Activated B cell treated with CpG ODN at 0.5 μM for 24 hours (primary cell): ENCODE measurements at regions of chr16 and their contacts with region 1.

Region 1: GRCh38 chr16:58000706-58001676 is at the start of gene USB1:
- DNase-seq: peak; percentile 97
- ATAC-seq: peak; percentile 84
- H3K4me3 Mint-ChIP-seq: peak within 1 kb of the TSS; percentile 94
- H3K27ac Mint-ChIP-seq: peak within 1 kb of the TSS; percentile 92
- H3K4me1 Mint-ChIP-seq: peaks cover 42% of the 10 kb centered on the region
- H3K27me3 Mint-ChIP-seq: no peaks in the 10 kb centered on the region
- CTCF ChIP-seq: no peak
- total RNA-seq, gene USB1: 37.4 and 40.7 TPM in 2 replicates

Region 2: DNA sequence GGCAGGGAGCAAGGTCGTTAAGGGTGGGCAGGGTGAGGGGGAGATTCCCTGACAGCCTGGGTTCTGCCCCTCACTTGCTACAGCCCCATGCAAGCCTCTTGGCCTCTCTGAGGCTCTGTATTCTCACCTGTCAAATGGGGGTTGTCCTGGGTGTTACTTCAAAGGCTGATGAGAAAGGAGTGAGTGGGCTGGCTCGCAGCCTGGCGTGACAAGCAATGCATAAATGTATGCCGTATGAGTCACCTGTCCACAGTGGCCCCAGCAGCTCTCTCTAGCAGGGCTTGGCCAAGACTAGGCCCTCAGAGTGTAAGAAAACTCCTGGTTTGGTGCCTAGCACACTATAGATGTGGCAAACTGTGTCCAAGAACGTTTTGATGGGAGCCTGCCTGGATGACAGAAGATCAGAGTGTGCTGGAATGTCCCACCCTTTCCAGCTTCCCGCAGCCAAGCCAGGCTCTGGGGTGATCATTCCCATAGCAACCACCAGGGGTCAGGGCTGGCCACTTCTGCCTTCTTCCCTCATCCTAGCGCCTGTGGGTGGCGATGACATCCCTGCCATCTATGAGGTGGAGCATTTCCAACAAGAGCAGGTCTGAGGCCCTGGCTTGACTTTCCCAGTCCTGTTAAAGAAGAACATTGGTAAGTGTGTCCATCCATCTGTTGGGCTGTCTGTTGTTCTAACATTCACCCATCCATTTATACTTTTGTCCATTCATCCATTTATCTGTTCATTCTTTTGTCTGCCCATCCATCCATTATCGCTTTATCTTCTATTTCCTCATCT is 409.7 kb before region 1 on chr16:
- CTCF ChIA-PET with region 1: interaction called, 3 read pairs
- POLR2A ChIA-PET with region 1: no interaction called
- intact Hi-C with region 1: loop called (anchors 1 kb)
- DNase-seq: no peak
- ATAC-seq: peak; percentile 90
- H3K4me3 Mint-ChIP-seq: no peak overlapping the region
- H3K27ac Mint-ChIP-seq: no peak overlapping the region
- H3K4me1 Mint-ChIP-seq: peaks cover 21% of the 10 kb centered on the region
- H3K27me3 Mint-ChIP-seq: peaks cover 11% of the 10 kb centered on the region
- CTCF ChIP-seq: no peak

Region 3: GRCh38 chr16:57757326-57757786 is 243.6 kb before region 1 on chr16:
- CTCF ChIA-PET with region 1: no interaction called
- POLR2A ChIA-PET with region 1: no interaction called
- intact Hi-C with region 1: loop called (anchors 1 kb)
- DNase-seq: peak; percentile 78
- ATAC-seq: peak; percentile 99
- H3K4me3 Mint-ChIP-seq: no peak overlapping the region
- H3K27ac Mint-ChIP-seq: no peak overlapping the region
- H3K4me1 Mint-ChIP-seq: no peaks in the 10 kb centered on the region
- H3K27me3 Mint-ChIP-seq: no peaks in the 10 kb centered on the region
- CTCF ChIP-seq: no peak

Region 4: DNA sequence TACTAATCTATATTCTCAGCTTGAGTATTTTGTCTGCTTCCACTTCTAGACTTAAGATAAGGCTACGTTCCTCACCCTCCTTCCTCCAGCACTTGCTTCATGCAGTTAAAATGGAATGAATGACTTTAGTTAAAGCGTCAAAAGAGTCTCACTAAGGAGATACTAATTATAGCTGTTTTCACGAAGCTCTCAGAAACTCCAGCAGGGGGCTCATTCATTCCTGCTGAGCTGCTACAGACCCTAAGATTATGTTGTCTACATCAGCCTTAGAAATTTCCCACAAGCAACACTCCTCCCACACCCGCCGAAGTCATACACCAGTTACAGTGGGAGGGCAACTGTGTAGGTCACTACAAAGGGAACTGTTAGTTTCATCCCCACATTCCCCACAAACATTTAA is 141.7 kb before region 1 on chr16:
- CTCF ChIA-PET with region 1: no interaction called
- POLR2A ChIA-PET with region 1: no interaction called
- intact Hi-C with region 1: no loop called
- DNase-seq: no peak
- ATAC-seq: no peak
- H3K4me3 Mint-ChIP-seq: no peak overlapping the region
- H3K27ac Mint-ChIP-seq: no peak overlapping the region
- H3K4me1 Mint-ChIP-seq: no peaks in the 10 kb centered on the region
- H3K27me3 Mint-ChIP-seq: peaks cover 24% of the 10 kb centered on the region
- CTCF ChIP-seq: no peak

Region 5: GRCh38 chr16:57899771-57900661 is 101.0 kb before region 1 on chr16:
- CTCF ChIA-PET with region 1: interaction called, 11 read pairs
- POLR2A ChIA-PET with region 1: interaction called, 6 read pairs
- intact Hi-C with region 1: loop called (anchors 1 kb)
- DNase-seq: peak; percentile 48
- ATAC-seq: peak; percentile 68
- H3K4me3 Mint-ChIP-seq: no peak overlapping the region
- H3K27ac Mint-ChIP-seq: no peak overlapping the region
- H3K4me1 Mint-ChIP-seq: no peaks in the 10 kb centered on the region
- H3K27me3 Mint-ChIP-seq: peaks cover 23% of the 10 kb centered on the region
- CTCF ChIP-seq: no peak

Region 6: GRCh38 chr16:57938936-57939871 is 61.8 kb before region 1 on chr16:
- CTCF ChIA-PET with region 1: no interaction called
- POLR2A ChIA-PET with region 1: no interaction called
- intact Hi-C with region 1: no loop called
- DNase-seq: no peak
- ATAC-seq: no peak
- H3K4me3 Mint-ChIP-seq: no peak overlapping the region
- H3K27ac Mint-ChIP-seq: no peak overlapping the region
- H3K4me1 Mint-ChIP-seq: no peaks in the 10 kb centered on the region
- H3K27me3 Mint-ChIP-seq: peaks cover 14% of the 10 kb centered on the region
- CTCF ChIP-seq: no peak

Region 7: DNA sequence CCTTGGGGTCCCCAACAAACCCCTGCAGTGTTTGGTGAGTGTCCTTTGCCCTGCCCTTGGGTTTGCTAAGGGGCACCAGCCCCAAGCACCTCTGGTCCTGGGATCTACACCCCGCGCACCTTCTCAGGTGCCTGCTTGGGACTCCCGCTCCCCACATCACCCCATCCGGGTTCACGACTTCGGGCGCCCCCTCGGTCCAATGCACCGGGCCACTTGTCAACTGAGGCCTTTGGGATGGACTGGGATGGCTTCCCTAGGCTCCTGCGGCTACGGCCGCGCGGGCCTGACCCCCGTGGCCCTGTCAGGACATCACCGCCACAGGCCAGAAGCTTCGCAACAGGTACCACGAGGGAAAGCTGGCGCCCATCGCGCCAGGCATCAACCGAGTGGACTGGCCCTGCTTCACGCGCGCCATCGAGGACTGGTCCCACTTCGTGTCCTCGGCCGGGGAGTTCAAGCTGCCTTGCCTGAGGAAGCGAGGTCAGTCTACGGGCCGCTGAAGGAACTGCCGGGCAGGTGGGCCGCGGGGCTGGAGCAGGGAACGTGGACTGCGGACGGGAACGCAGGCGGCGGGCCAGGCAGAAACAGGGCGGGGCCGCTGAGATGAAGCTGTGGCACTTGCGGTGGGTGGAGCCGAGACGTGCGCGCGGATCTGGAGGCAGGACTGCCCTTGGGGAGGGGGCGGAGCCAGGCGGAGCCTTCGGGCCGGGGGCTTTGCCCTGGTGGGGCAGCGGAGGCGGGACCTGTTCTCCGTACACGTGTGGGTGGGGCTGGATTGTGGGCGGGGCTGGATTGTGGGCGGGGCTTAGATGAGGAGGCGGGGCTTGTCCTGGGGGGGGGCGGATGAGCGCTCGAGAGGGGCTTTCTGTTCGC is 16.4 kb before region 1 on chr16:
- CTCF ChIA-PET with region 1: no interaction called
- POLR2A ChIA-PET with region 1: interaction called, 5 read pairs
- intact Hi-C with region 1: loop called (anchors 1 kb)
- DNase-seq: peak; percentile 82
- ATAC-seq: peak; percentile 99
- H3K4me3 Mint-ChIP-seq: peak overlapping the region; percentile 91
- H3K27ac Mint-ChIP-seq: no peak overlapping the region
- H3K4me1 Mint-ChIP-seq: peaks cover 14% of the 10 kb centered on the region
- H3K27me3 Mint-ChIP-seq: peaks cover 4% of the 10 kb centered on the region
- CTCF ChIP-seq: no peak

Region 8: DNA sequence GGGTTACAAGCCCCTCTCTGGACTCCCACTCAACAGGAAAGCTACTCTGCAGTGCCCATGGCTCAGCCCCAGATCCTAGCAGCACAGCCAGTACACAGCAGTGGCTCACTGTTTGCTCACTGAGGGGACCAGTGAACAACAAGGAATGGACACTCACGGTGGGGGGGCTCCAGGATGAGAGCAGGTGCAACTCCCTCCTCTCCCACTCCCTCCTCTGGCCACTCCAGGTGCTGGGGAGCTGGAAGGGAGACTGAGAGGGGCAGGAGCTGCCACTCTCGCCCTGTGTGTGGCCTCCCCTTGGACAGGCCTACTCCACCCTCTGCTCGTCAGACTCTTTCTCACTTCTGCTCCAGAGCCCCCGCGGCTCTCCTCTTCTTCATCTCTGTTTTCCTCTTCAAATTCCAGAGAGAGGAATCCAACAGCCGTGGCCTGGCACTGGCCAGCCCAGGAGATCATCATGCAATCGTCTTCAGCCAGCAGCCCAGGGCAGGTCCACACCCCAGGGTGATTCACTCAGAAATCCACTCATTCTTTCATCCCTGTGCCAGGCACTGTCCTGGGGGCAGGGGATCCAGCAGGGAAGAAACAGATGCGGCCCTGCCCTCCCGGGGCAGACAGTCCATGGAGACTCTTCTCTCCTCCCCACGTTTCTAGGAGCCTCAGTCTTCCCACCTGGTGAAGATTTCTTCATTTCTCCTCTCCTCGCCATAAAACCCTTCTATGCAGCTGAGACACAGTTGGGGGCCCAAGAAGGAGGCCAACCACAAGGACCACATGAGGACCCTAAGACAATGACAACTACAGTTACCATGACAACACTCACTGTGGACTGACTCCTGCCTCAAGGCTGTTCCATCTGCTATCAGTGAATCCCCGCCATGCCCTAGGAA is 97.5 kb after region 1 on chr16:
- CTCF ChIA-PET with region 1: no interaction called
- POLR2A ChIA-PET with region 1: no interaction called
- intact Hi-C with region 1: no loop called
- DNase-seq: no peak
- ATAC-seq: no peak
- H3K4me3 Mint-ChIP-seq: no peak overlapping the region
- H3K27ac Mint-ChIP-seq: no peak overlapping the region
- H3K4me1 Mint-ChIP-seq: peaks cover 1% of the 10 kb centered on the region
- H3K27me3 Mint-ChIP-seq: peaks cover 8% of the 10 kb centered on the region
- CTCF ChIP-seq: no peak